ENCODE measurements at regions of chrX and their contacts with region 1.

Region 1: GRCh38 chrX:120629667-120630537 is at the start of gene C1GALT1C1:
- DNase-seq: peak; percentile 90 to 95 (median 93)
- H3K4me3 ChIP-seq: peak within 1 kb of the TSS; percentile 76 to 79
- H3K4me3 Mint-ChIP-seq: peak within 1 kb of the TSS; percentile 89 to 98 (median 94)
- H3K27ac ChIP-seq: peak within 1 kb of the TSS; percentile 92
- H3K27ac Mint-ChIP-seq: peak within 1 kb of the TSS; percentile 92 to 99 (median 98)
- H3K4me1 ChIP-seq: peaks cover 27% of the 10 kb centered on the region
- H3K4me1 Mint-ChIP-seq: peaks cover 13 to 27% (median 19%) of the 10 kb centered on the region in 4 donors
- H3K27me3 ChIP-seq: no peaks in the 10 kb centered on the region
- H3K27me3 Mint-ChIP-seq: no peaks in the 10 kb centered on the region
- total RNA-seq, gene C1GALT1C1: 17.0 to 19.6 TPM

Region 2: GRCh38 chrX:120560842-120561633 is 68.9 kb before region 1 on chrX and contains the start of gene CUL4B:
- CTCF ChIA-PET with region 1: no interaction called
- POLR2A ChIA-PET with region 1: interaction called, 22 read pairs
- intact Hi-C with region 1: loop called (anchors 1 kb)
- DNase-seq: peak; percentile 89 to 97 (median 91)
- H3K4me3 ChIP-seq: peak within 1 kb of the TSS; percentile 59 to 90
- H3K4me3 Mint-ChIP-seq: peak within 1 kb of the TSS; percentile 91 to 99 (median 94)
- H3K27ac ChIP-seq: peak within 1 kb of the TSS; percentile 91
- H3K27ac Mint-ChIP-seq: peak within 1 kb of the TSS; percentile 94 to 98 (median 96)
- H3K4me1 ChIP-seq: peaks cover 31% of the 10 kb centered on the region
- H3K4me1 Mint-ChIP-seq: peaks cover 9 to 44% (median 17%) of the 10 kb centered on the region in 4 donors
- H3K27me3 ChIP-seq: no peaks in the 10 kb centered on the region
- H3K27me3 Mint-ChIP-seq: no peaks in the 10 kb centered on the region
- total RNA-seq, gene CUL4B: 54.0 to 61.0 TPM

Region 3: DNA sequence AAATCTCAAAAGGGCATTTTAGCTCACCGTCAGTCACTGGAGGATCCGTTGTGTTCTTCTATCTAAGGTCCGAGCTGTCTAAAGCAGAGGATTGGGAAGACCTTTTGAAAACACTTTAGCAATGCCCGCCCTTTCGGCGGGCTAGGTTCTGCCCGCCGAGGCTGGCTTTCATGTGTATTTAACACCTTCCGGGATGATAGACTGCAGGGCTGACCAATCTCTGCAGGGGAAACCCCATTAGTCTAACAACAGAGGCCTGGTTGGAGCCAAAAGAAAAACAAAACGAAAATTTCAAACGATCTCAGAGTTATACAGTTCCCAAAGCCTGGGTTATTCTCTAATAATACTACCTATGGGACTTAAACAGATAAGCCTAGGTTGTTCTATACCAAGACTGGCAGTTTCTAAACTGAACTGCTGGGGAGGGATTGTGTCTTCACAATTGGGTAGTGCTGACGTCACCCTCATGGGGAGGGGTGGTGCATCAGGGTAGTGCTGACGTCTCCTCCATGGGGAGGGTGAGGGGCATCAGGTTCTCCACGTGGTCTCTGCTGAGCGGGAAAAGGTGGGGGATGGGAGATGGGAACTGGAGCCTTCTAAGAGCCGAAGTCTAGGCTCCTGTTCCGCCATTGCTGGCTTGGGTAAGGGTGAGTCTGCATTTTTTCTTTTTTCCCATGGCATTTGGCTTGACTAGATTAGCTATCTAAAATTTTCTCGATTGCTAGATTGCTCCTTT is 54.4 kb before region 1 on chrX:
- CTCF ChIA-PET with region 1: no interaction called
- POLR2A ChIA-PET with region 1: no interaction called
- intact Hi-C with region 1: no loop called
- DNase-seq: no peak
- H3K4me3 ChIP-seq: no peak overlapping the region
- H3K4me3 Mint-ChIP-seq: no peak overlapping the region
- H3K27ac ChIP-seq: no peak overlapping the region
- H3K27ac Mint-ChIP-seq: no peak overlapping the region
- H3K4me1 ChIP-seq: peaks cover 3% of the 10 kb centered on the region
- H3K4me1 Mint-ChIP-seq: peaks cover 0 to 5% (median under 1%) of the 10 kb centered on the region in 4 donors
- H3K27me3 ChIP-seq: no peaks in the 10 kb centered on the region
- H3K27me3 Mint-ChIP-seq: peaks cover 2 to 5% of the 10 kb centered on the region in 2 donors

Region 4: DNA sequence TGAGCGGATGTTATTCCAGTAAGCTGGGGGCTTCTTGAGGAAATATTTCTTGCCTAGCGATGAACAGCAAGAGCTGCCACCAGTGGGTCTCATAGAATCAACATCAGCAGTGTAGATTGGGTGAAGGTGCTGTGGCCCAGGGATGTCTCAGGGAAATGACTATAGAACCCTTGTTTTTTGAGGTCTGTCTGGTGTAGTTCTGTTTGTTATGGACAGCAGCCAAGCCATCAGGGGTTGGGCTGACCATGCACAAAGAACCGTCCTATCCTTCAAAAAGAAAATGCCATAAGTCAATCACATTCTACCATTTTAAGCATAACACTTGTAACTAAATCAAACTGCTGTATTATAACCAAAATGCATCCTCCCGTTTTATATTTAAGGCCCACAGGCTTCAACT is 17.2 kb after region 1 on chrX:
- CTCF ChIA-PET with region 1: no interaction called
- POLR2A ChIA-PET with region 1: no interaction called
- intact Hi-C with region 1: no loop called
- DNase-seq: no peak
- H3K4me3 ChIP-seq: no peak overlapping the region
- H3K4me3 Mint-ChIP-seq: no peak overlapping the region
- H3K27ac ChIP-seq: no peak overlapping the region
- H3K27ac Mint-ChIP-seq: no peak overlapping the region
- H3K4me1 ChIP-seq: no peaks in the 10 kb centered on the region
- H3K4me1 Mint-ChIP-seq: peaks cover 0 to 4% (median 0%) of the 10 kb centered on the region in 4 donors
- H3K27me3 ChIP-seq: no peaks in the 10 kb centered on the region
- H3K27me3 Mint-ChIP-seq: peaks cover 0 to 2% of the 10 kb centered on the region in 2 donors

Measured in CD4-positive, alpha-beta memory T cell (primary cell).